Activated CD4-positive, alpha-beta memory T cell treated with anti-CD3 and anti-CD28 coated beads for 36 hours (primary cell): ENCODE measurements at regions of chr17 and their contacts with region 1.

Region 1: DNA sequence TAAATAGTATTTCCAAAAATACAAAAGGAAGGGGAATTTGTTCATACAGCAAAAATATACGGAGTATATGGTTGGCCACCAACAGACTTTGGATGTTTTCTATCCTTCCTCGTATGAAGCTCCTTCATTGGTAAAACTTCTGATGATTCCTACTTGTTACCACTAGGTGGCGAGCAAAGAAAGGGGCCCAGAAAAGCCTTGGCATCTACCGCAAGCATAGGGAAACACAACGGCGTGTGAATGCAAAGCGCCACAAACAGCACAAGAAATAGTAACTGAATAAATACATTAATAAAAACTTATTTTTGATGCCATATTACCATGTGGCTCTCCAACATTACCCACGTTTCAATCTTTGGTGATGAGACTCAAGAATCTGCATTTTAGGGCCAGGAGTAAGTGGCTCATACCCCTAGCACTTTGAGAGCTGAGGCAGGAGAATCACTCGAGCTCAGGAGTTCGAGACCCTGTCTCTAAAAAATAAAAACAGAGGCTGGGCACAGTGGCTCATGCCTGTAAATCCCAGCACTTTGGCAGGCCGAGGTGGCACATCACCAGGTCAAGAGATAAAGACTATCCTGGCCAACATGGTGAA is 34.5 kb downstream of the YWHAE start:
- DNase-seq: peak; percentile 67
- H3K4me3 Mint-ChIP-seq: no peak overlapping the region
- H3K27ac Mint-ChIP-seq: peak overlapping the region; percentile 54
- H3K4me1 Mint-ChIP-seq: peaks cover 69% of the 10 kb centered on the region
- H3K27me3 Mint-ChIP-seq: no peaks in the 10 kb centered on the region

Region 2: DNA sequence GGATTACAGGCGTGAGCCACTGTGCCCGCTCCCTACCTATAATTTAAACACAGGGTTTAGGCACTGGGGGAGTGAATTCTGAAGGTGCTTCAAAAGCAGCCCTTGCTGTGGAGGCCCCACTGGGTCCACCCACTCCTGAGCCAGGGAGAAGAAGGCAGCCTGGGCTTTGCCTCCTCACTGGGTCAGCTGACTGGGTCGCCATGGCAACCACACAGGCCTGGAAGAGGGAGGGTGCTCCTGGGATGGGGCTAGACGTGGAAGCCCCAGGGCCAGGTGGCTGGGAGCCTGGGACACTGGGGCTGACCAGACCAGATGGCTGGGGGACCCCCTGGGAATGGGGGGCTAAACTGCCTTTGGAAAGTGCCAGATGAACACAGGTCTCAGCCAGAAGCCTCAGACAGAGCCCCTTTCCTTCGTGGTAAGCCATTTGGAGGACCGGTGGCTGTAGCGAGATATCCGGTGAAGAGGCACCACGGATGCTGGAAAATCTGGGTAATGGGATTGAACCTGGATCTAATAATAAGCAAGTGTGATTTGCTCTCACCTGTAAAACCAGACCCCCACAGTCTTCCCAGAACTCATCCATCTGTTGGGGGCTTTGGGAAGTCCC is 53.2 kb before region 1 on chr17:
- CTCF ChIA-PET with region 1: no interaction called
- POLR2A ChIA-PET with region 1: no interaction called
- intact Hi-C with region 1: no loop called
- DNase-seq: peak; percentile 22
- H3K4me3 Mint-ChIP-seq: no peak overlapping the region
- H3K27ac Mint-ChIP-seq: no peak overlapping the region
- H3K4me1 Mint-ChIP-seq: no peaks in the 10 kb centered on the region
- H3K27me3 Mint-ChIP-seq: peaks cover 6% of the 10 kb centered on the region

Region 3: DNA sequence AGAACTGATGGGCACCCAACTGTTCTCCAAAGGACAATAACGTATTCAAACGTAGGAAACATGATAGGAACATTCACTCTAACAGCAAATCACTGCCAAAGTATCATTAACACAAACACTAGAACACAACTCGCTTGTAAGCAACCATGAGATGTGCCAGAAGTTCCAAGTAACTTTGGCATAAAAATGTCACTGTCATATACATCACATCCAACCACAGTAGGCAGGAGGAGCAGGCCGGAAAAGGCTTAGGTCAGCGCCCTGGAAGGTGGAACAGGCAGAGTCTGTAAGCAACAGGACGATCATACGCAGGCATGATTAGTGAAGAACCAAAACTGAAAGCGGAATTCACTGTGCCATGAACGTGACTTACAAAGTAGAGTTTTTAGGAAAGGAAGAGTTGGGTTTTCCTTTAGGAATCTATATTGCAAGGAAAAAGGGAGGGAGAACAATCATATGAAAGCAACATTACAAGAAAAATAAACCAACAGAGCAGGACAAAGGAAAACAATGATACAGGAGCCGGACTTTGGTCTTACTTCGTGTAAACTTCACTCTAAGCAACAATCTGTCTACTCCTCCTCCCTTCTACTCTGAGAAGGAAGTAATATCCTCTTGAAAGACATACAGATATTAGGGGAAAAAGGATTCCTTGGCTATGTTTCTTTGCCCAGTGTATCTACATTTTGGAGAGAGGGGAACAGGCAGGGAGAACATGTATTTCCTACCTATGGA is 17.8 kb before region 1 on chr17:
- CTCF ChIA-PET with region 1: interaction called, 11 read pairs
- POLR2A ChIA-PET with region 1: interaction called, 3 read pairs
- intact Hi-C with region 1: no loop called
- DNase-seq: peak; percentile 28
- H3K4me3 Mint-ChIP-seq: peak overlapping the region; percentile 38
- H3K27ac Mint-ChIP-seq: peak overlapping the region; percentile 62
- H3K4me1 Mint-ChIP-seq: peaks cover 34% of the 10 kb centered on the region
- H3K27me3 Mint-ChIP-seq: no peaks in the 10 kb centered on the region

Region 4: DNA sequence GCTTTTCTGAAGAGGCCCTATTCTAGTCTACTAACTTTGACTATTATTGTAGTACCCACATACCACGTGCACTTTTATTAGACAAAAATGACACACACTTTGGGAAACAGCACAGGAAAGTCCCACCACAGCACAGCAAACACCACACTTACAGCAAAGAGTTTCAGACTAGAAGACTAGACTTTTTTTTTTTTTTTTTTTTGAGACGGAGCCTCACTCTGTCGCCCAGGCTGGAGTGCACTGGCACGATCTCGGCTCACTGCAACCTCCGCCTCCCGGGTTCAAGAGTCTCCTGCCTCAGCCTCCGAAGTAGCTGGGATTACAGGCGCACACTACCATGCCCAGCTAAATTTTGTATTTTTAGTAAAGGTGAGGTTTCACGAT is 14.4 kb after region 1 on chr17:
- CTCF ChIA-PET with region 1: interaction called, 98 read pairs
- POLR2A ChIA-PET with region 1: interaction called, 6 read pairs
- intact Hi-C with region 1: loop called (anchors 1 kb)
- DNase-seq: peak; percentile 59
- H3K4me3 Mint-ChIP-seq: no peak overlapping the region
- H3K27ac Mint-ChIP-seq: peak overlapping the region; percentile 81
- H3K4me1 Mint-ChIP-seq: peaks cover 69% of the 10 kb centered on the region
- H3K27me3 Mint-ChIP-seq: no peaks in the 10 kb centered on the region

Region 5: GRCh38 chr17:1399679-1400512 is 34.4 kb after region 1 on chr17 and contains the start of gene YWHAE:
- CTCF ChIA-PET with region 1: interaction called, 42 read pairs
- POLR2A ChIA-PET with region 1: interaction called, 9 read pairs
- intact Hi-C with region 1: loop called (anchors 1 kb)
- DNase-seq: peak; percentile 98
- H3K4me3 Mint-ChIP-seq: peak within 1 kb of the TSS; percentile 99
- H3K27ac Mint-ChIP-seq: peak within 1 kb of the TSS; percentile 100
- H3K4me1 Mint-ChIP-seq: peaks cover 26% of the 10 kb centered on the region
- H3K27me3 Mint-ChIP-seq: no peaks in the 10 kb centered on the region
- total RNA-seq, gene YWHAE: 505 to 509 TPM

Region 6: DNA sequence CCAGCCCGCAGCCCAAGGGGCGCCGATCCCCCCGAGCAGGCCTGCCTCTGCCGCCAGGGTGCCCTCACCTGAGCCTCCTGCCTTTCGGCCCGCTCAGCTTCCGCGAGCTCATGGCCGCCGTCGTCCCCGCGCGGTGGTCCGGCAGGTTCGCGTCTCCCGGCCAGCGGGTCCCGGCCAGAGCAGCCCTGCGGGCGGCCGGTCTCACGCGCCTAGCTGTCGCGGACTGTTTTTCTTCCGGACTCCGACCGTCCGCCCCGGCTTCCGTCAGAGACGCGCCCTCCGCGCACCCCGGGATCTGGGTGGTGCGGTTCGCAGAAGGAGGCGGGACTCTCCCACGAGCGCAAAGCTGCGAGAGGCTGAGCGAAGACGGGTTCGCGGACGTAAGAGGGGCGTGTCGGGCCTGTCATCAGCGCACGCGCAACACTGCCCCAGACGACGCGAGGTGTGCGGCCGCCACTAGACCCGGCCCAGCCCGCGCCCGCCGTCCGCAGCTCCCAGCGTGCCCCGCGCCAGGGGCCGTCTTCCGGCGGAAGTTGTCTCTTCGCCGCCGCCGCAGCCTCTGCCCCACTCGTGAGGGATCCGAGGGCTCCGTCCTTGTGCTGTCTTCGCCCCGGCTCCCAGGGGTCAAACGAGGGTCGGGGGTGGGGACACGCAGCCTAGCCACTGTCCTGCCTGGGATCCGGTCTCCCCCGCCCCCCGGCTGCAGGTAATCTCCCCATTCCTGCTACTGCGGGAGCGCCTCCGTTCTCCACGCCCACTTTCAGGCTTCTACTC is 151.0 kb after region 1 on chr17 and contains the start of gene INPP5K:
- CTCF ChIA-PET with region 1: interaction called, 60 read pairs
- POLR2A ChIA-PET with region 1: interaction called, 4 read pairs
- intact Hi-C with region 1: loop called (anchors 1 kb)
- DNase-seq: peak; percentile 99
- H3K4me3 Mint-ChIP-seq: peak within 1 kb of the TSS; percentile 86
- H3K27ac Mint-ChIP-seq: peak within 1 kb of the TSS; percentile 66
- H3K4me1 Mint-ChIP-seq: peaks cover 24% of the 10 kb centered on the region
- H3K27me3 Mint-ChIP-seq: no peaks in the 10 kb centered on the region
- total RNA-seq, gene INPP5K: 21.2 to 24.0 TPM

Region 7: DNA sequence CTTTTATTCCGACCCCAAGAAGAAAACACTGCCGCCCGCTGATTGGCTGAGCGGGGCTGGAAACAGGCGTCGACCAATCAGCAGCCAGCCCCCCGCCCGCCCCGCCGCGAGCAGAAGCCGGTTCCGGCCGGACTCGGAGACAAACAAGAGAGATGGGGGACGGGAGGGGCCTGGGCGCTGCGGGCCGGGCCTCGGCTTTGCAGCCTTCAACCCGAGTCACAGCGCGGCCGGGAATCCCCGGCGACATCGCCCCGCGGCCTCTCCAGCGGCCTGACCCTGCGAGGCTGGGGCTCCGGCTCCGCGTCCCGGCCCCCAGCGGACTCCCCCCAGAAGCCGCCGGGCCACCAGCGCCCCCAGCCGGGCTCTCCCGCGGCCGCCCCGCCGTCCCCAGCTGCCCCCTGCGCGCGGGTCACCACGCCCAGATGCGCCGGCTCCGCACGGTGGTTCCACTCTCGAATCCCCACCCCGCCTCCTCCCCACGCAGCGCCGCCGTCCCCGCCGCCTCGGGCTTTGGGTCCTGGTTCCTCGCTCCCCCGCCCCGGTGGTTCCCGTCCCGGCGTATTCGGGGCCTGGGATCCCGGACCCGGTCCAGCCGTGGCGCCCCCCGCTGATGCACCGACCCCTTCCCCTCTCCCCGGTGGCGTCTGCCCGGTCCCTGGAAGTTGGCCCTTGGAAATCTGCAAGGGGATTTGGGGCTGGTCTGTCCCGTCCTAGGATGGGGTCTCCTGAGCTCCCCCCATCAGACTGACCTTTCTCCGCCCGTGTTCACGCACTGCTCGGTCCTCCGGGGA is 263.5 kb after region 1 on chr17:
- CTCF ChIA-PET with region 1: interaction called, 18 read pairs
- POLR2A ChIA-PET with region 1: no interaction called
- intact Hi-C with region 1: no loop called
- DNase-seq: peak; percentile 93
- H3K4me3 Mint-ChIP-seq: peak overlapping the region; percentile 87
- H3K27ac Mint-ChIP-seq: peak overlapping the region; percentile 67
- H3K4me1 Mint-ChIP-seq: peaks cover 11% of the 10 kb centered on the region
- H3K27me3 Mint-ChIP-seq: peaks cover 16% of the 10 kb centered on the region